ENCODE measurements at regions of chr3 and their contacts with region 1.

Region 1: DNA sequence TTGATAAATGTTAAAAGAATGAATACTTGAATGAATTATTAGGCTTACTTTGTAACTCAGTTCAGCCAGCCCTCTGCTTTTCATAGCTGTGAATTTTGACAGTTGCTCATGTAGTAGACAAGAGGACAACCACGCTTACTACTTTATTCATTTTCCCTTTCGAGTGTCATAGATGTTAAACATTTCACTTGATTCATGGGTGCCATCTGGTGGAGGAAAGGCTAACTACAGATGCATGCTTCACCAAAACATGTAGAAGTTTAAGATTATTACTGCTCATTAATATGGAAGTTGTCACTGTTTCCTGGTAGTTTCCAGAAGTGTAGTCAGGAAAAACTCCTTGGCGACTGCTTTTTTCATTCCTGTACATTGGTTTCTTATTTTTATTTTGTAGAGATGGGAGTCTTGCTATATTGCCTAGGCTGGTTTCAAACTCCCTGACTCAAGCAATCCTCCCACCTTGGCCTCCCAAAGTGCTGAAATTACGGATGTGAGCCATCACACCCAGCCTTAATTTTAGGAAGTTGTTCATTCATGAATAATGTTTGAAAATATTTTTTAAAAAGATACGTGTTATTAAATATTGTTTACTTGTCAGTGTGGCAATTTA is 163.2 kb downstream of the B3GALNT1 start:
- DNase-seq: peak in 1 of 2 donors; percentile 79
- ATAC-seq: peak in 7 of 8 donors; percentile 63 to 84 (median 77)
- H3K4me3 ChIP-seq: no peak overlapping the region
- H3K27ac ChIP-seq: no peak overlapping the region
- H3K4me1 ChIP-seq: peaks cover 0 to 7% (median 0%) of the 10 kb centered on the region in 9 donors
- H3K27me3 ChIP-seq: no peaks in the 10 kb centered on the region
- CTCF ChIP-seq: peak; percentile 73 to 94 (median 89)

Region 2: DNA sequence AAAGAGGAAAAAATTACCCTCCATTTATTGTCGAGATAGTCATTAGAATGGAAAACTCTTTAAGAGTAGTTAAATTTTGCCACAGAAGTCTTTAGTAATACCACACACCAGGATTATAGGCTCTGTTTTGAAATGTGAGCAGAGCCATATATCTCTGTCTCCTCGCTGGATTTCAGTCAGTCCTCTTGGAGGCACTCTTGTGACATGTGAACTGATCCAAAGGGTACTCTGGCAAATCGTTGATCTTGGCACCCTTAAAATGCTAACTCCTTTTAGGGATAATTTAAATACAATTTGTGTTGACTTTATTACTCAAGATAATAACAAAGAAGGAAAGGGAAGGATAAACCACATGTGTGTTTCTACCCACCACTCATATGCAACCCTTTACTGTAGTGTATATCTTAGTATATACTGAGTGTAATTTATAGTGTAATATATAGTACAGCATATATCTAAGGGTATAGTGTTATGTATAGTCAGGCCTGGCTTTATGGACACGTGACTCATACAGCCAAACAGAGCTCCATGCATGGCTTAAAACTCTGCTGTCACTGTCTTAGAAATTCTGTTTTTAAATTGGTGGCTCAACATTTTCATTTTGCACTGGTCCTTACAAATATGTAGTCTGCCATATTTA is 364.3 kb before region 1 on chr3:
- intact Hi-C with region 1: loop called in 1 of 10 experiments (anchors 10 kb)
- DNase-seq: no peak
- ATAC-seq: peak; percentile 38 to 93 (median 82)
- H3K4me3 ChIP-seq: no peak overlapping the region
- H3K27ac ChIP-seq: peak overlapping the region in 3 of 10 donors; percentile 12 to 51 (median 39)
- H3K4me1 ChIP-seq: peaks cover 0 to 9% (median 0%) of the 10 kb centered on the region in 9 donors
- H3K27me3 ChIP-seq: no peaks in the 10 kb centered on the region
- CTCF ChIP-seq: peak in 4 of 9 donors; percentile 29 to 57 (median 51)

Region 3: GRCh38 chr3:160686955-160687535 is 254.9 kb before region 1 on chr3:
- intact Hi-C with region 1: loop called in 1 of 10 experiments (anchors 5 kb)
- DNase-seq: no peak
- ATAC-seq: no peak
- H3K4me3 ChIP-seq: no peak overlapping the region
- H3K27ac ChIP-seq: no peak overlapping the region
- H3K4me1 ChIP-seq: no peaks in the 10 kb centered on the region
- H3K27me3 ChIP-seq: no peaks in the 10 kb centered on the region
- CTCF ChIP-seq: peak in 7 of 9 donors; percentile 28 to 53 (median 43)

Region 4: DNA sequence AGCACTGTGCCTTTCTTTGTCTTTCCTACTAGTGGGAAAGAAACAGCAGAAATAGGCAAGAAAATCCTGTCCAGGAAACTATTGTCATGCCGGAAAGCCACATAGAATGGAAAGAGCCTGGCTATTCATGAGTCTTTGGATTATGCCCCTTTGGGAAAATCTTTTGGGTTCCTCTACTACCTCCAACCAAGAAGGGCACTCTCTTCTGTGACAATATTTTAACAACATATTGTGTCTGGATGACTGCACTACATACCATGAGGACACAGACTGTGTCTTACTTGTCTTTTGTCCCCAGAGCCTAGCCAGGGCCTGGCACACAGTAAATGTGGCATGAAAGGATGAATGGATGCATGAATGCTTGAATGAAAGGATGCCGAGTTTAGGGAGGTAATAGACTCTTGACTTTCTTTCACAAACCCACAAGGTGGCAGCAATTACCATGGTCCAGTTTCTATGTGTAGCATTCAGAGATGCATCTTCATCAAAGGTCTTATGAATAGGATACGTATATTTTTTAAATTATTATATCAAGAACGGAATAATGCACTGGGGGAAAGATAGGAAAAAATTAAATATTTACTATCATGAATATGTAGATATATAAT is 234.7 kb before region 1 on chr3:
- intact Hi-C with region 1: loop called (anchors 1 to 5 kb)
- DNase-seq: peak in 1 of 2 donors; percentile 61
- ATAC-seq: peak; percentile 64 to 82 (median 79)
- H3K4me3 ChIP-seq: no peak overlapping the region
- H3K27ac ChIP-seq: no peak overlapping the region
- H3K4me1 ChIP-seq: no peaks in the 10 kb centered on the region
- H3K27me3 ChIP-seq: peaks cover 0 to 19% (median 0%) of the 10 kb centered on the region in 7 donors
- CTCF ChIP-seq: peak; percentile 31 to 78 (median 67)

Region 5: DNA sequence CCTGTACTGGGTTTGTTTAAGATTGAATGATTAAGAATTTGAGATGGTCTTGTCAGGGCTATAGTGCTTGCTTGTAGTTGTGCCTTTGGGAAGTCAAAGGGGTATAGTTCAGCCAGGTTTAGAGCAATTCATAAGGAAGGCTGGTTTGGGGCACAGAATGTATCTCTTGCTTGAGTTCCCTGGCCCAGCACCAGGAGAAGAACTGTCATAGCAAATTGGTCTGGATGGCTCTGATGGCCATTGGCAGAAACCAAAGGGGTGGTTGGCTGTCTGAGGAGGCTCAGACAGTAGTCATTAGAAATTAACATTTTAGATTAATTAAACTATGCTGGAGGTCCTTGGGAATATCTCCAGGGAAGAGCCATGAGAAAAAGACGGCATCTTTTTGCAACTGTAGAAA is 529.2 kb after region 1 on chr3:
- intact Hi-C with region 1: no loop called
- DNase-seq: no peak
- ATAC-seq: no peak
- H3K4me3 ChIP-seq: no peak overlapping the region
- H3K27ac ChIP-seq: no peak overlapping the region
- H3K4me1 ChIP-seq: no peaks in the 10 kb centered on the region
- H3K27me3 ChIP-seq: peaks cover 0 to 10% (median 0%) of the 10 kb centered on the region in 7 donors
- CTCF ChIP-seq: no peak

Measured in heart right ventricle (tissue), 16 donors.